Right cardiac atrium (tissue), 5 donors: ENCODE measurements at regions of chr16 and their contacts with region 1.

Region 1: DNA sequence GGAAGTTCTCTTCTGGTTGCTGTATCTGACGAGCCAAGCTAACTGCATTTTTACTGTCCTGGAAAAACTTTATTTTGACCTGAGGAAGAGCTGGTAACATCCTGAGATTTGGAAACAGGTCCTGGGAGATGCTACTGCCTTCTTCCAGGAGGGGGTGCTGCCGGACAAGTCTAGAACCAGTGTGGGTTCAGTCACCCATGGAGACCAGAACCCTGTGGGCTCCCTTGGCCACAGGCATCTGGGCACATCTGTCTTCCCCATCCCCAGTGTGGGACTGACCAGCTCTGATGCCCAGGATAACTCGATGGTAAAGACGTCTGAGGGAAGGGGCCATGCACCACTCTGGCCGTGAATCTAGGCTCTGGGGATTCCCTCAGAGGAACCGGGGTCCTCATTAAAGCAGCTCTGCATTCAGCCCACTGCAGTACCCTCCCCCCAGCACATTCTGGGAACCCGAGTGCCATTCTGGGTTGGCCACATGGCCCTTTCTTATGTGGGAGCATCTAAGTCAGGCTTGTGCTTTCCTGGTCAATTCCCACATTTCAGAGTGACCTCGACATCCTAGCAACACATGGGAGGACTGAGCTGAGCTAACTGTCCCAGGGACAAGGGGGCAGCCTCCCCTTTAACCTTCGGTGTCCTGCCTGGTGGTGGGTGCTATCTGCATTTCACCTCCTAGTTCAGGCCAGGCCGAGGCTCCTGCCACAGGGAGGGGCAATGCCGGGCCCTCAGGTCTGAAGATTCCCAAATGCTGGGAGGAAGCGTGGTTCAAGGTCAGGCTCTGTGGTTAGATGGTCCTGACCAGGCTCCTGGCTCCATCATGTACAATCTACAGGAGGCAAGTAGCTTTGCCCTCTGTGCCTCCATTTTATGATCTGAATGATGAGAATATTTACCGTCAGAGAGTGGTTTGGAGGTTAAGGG is 6.4 kb downstream of the C16orf86 start:
- DNase-seq: peak; percentile 74 to 87 (median 84)
- ATAC-seq: peak; percentile 44 to 69
- H3K4me3 ChIP-seq: no peak overlapping the region
- H3K27ac ChIP-seq: peak overlapping the region; percentile 71
- H3K4me1 ChIP-seq: peaks cover 5% of the 10 kb centered on the region
- H3K27me3 ChIP-seq: no peaks in the 10 kb centered on the region

Region 2: GRCh38 chr16:67806428-67807147 is 133.6 kb after region 1 on chr16 and contains the starts of genes RANBP10 and TSNAXIP1:
- intact Hi-C with region 1: loop called in 2 of 4 experiments (anchors 10 kb)
- DNase-seq: peak; percentile 97 to 98 (median 98)
- ATAC-seq: peak; percentile 99
- H3K4me3 ChIP-seq: peak within 1 kb of the TSS; percentile 69
- H3K27ac ChIP-seq: peak within 1 kb of the TSS; percentile 61
- H3K4me1 ChIP-seq: peaks cover 3% of the 10 kb centered on the region
- H3K27me3 ChIP-seq: no peaks in the 10 kb centered on the region
- total RNA-seq, gene RANBP10: 11.1 to 16.3 (median 12.4) TPM
- total RNA-seq, gene TSNAXIP1: 0.56 to 0.94 (median 0.79) TPM